ENCODE measurements at regions of chr4 and their contacts with region 1.

Region 1: DNA sequence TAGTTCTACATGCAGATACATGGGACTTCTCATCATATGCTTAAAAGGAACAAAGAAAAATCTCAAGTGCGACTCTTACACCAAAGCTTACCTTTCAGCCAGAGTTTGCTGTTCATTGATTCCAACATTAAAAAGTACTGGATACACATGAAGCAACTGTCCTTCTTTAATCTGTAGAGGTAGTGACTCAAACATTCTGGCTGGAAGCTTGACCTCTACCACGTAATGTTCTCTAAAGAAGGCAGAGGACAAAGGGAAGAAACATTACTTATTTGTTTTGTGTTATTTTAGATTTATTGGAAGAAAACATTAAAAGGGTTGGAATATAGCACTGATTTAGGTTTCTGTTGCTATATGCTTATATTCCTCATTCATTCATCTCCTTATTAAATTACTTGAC is 476.1 kb downstream of the IL15 start:
- DNase-seq: no peak

Region 2: DNA sequence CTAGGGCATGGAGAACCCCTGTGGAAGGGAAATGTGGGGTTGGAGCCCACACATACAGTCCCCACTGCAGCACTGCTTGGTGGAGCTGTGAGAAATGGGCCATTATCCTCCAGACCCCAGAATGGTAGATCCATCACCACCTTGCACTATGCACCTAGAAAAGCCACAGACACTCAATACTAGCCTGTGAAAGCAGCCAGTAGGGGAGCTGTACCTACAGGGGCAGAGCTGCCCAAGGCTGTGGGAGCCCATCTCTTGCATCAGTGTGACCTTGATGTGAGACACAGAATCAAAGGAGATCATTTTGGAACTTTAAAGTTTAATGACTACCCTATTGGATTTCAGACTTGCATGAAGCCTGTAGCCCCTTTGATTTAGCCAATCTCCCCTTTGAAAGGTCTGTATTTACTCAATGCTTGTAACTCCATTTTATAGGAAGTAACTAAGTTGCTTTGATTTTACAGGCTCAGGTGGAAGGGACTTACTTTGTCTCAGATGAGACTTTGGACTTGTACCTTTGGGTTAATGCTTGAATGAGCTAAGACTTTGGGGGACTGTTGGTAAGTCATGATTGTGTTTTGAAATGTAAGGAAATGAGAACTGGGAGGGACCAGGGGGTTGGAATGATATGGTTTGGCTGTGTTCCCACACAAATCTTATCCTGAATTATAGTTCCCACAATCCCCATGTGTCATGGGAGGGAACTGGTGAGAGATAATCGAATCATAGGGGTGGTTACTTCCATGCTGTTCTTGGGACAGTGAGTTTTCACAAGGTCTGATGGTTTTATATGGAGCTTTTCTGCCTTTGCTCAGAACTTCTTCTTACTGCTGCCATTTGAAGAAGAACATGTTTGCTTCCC is 381.0 kb after region 1 on chr4:
- intact Hi-C with region 1: no loop called
- DNase-seq: no peak

Region 3: DNA sequence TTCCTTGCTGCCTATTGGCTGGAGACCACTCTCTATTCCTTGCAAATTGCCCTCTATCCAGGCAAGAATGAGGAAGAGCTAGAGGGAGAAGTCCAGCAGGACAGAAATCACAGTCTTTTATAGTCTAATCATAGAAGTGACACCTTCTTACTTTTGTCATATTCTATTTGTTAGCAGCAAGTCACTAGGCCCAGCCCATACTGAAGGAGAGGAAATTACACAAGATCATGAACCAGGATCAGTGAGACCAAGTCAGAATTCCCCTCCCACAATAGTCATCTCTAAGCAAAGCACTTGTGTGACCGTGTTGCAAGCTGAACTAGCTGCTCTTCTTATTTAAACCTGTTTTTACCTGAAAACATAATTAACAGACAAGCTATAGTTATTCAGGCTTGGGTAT is 416.0 kb after region 1 on chr4:
- intact Hi-C with region 1: loop called in 1 of 2 experiments (anchors 5 kb)
- DNase-seq: no peak

Measured in posterior vena cava (tissue), 2 donors.